Adrenal gland (tissue), 19 donors: ENCODE measurements at regions of chrX and their contacts with region 1.

Region 1: GRCh38 chrX:106952988-106953387 is 32.8 kb downstream of the CLDN2 start:
- DNase-seq: no peak
- H3K4me3 ChIP-seq: no peak overlapping the region
- H3K27ac ChIP-seq: no peak overlapping the region
- H3K4me1 ChIP-seq: no peaks in the 10 kb centered on the region
- H3K27me3 ChIP-seq: no peaks in the 10 kb centered on the region
- CTCF ChIP-seq: peak; percentile 36 to 54 (median 48)
- POLR2A ChIP-seq: no peak

Region 2: GRCh38 chrX:106898462-106898861 is 54.5 kb before region 1 on chrX:
- intact Hi-C with region 1: loop called in 1 of 2 experiments (anchors 5 kb)
- DNase-seq: peak in 3 of 7 donors; percentile 31 to 45 (median 34)
- H3K4me3 ChIP-seq: no peak overlapping the region
- H3K27ac ChIP-seq: no peak overlapping the region
- H3K4me1 ChIP-seq: peaks cover 0 to 8% of the 10 kb centered on the region in 2 donors
- H3K27me3 ChIP-seq: no peaks in the 10 kb centered on the region
- CTCF ChIP-seq: peak; percentile 11 to 48 (median 40)
- POLR2A ChIP-seq: no peak